ENCODE measurements at regions of chr11 and their contacts with region 1.

Region 1: GRCh38 chr11:119194811-119195440 is 9.7 kb downstream of the NHERF4 start:
- DNase-seq: no peak
- H3K4me3 ChIP-seq: no peak overlapping the region
- H3K27ac ChIP-seq: no peak overlapping the region
- H3K4me1 ChIP-seq: no peaks in the 10 kb centered on the region
- H3K27me3 ChIP-seq: no peaks in the 10 kb centered on the region
- CTCF ChIP-seq: no peak

Region 2: GRCh38 chr11:119155733-119156492 is 39.0 kb before region 1 on chr11:
- intact Hi-C with region 1: loop called (anchors 5 kb)
- DNase-seq: peak; percentile 41
- H3K4me3 ChIP-seq: no peak overlapping the region
- H3K27ac ChIP-seq: no peak overlapping the region
- H3K4me1 ChIP-seq: no peaks in the 10 kb centered on the region
- H3K27me3 ChIP-seq: peaks cover 3% of the 10 kb centered on the region
- CTCF ChIP-seq: no peak

Region 3: GRCh38 chr11:119567688-119568582 is 373.0 kb after region 1 on chr11:
- intact Hi-C with region 1: no loop called
- DNase-seq: no peak
- H3K4me3 ChIP-seq: no peak overlapping the region
- H3K27ac ChIP-seq: no peak overlapping the region
- H3K4me1 ChIP-seq: no peaks in the 10 kb centered on the region
- H3K27me3 ChIP-seq: no peaks in the 10 kb centered on the region
- CTCF ChIP-seq: no peak

Measured in colonic mucosa (tissue), 4 donors.